Pancreas (tissue), 10 donors: ENCODE measurements at regions of chr14 and their contacts with region 1.

Region 1: GRCh38 chr14:20454516-20455354 is at the starts of genes APEX1 and OSGEP:
- DNase-seq: peak; percentile 95 to 99 (median 98)
- ATAC-seq: peak; percentile 92 to 97 (median 94)
- H3K4me3 ChIP-seq: peak within 1 kb of the TSS; percentile 53 to 82 (median 68)
- H3K27ac ChIP-seq: peak within 1 kb of the TSS; percentile 78 to 95 (median 88)
- H3K4me1 ChIP-seq: peaks cover 7 to 14% (median 11%) of the 10 kb centered on the region in 3 donors
- H3K27me3 ChIP-seq: no peaks in the 10 kb centered on the region
- CTCF ChIP-seq: no peak
- total RNA-seq, gene APEX1: 50.9 to 107 (median 64.6) TPM
- total RNA-seq, gene OSGEP: 11.4 to 16.0 (median 13.9) TPM

Region 2: DNA sequence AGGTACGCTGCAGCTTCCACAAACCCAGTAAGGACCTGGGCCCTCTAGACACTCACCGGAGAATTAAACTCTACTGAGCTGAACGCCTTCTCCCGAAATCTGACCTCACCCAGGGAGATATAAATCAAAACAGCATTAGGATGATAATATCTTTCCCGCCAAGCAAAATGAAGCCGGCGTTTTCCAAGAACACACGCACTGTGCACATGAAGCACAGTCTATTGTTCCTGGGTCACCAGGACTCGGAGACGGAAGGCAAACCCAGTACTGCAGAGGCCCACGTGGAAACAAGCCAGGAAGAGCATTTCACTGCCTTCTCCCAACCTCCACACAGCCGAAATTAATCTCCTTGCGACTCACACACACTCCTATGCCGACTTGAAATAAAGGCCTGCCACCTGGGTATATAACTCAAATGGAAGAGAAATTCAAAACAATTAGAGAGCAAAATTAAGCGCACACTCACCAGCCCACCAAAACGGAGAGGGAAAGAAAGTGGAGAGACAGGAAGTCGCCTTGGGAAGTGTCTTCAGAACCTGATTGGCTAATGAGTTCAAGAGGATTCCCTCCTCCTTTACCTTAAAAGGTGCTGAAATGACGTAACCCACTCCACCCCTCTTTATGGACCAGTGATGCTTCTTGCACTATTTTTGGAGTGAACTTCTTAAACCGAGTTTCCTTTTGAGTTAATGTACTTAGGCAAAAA is 121.8 kb before region 1 on chr14 and contains the start of gene CCNB1IP1:
- intact Hi-C with region 1: loop called in 1 of 3 experiments (anchors 10 kb)
- DNase-seq: peak in 4 of 6 donors; percentile 34 to 73 (median 58)
- ATAC-seq: peak; percentile 99
- H3K4me3 ChIP-seq: peak within 1 kb of the TSS; percentile 35 to 60 (median 42)
- H3K27ac ChIP-seq: peak within 1 kb of the TSS; percentile 72 to 90 (median 81)
- H3K4me1 ChIP-seq: peaks cover 0 to 6% (median 5%) of the 10 kb centered on the region in 3 donors
- H3K27me3 ChIP-seq: no peaks in the 10 kb centered on the region
- CTCF ChIP-seq: no peak
- total RNA-seq, gene CCNB1IP1: 17.4 to 34.0 (median 25.0) TPM